Common myeloid progenitor, CD34-positive (primary cell): ENCODE measurements at regions of chr6 and their contacts with region 1.

Region 1: GRCh38 chr6:125913864-125914351 is 42.7 kb upstream of the HINT3 start:
- DNase-seq: no peak
- H3K4me3 ChIP-seq: no peak overlapping the region
- H3K27ac ChIP-seq: no peak overlapping the region
- H3K4me1 ChIP-seq: peaks cover 0 to 18% (median 10%) of the 10 kb centered on the region in 4 experiments
- H3K27me3 ChIP-seq: no peaks in the 10 kb centered on the region

Region 2: DNA sequence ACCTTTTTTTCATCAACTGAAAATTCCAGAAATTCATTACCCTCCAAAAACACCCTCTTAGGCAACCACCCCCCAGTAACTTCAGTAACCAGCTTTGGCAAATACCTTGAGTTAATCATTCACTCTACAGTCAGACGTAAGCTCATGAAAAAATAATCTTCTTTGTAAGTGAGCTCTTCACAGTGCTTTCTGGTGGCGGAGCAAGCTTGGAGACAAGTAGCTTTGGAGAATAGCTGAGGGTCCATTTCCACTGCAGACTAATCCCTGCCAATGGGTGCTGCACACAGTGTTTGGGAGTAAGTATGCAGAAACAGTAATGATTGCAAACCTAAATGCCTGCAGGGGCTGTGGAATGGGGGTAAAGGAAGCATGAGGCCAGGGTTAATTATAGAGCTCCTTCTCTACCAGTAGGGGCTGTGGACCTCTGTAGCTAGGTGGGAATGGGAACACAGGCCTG is 14.2 kb before region 1 on chr6:
- CTCF ChIA-PET with region 1: interaction called, 113 read pairs
- POLR2A ChIA-PET with region 1: no interaction called
- DNase-seq: no peak
- H3K4me3 ChIP-seq: no peak overlapping the region
- H3K27ac ChIP-seq: no peak overlapping the region
- H3K4me1 ChIP-seq: peaks cover 0 to 9% (median 6%) of the 10 kb centered on the region in 4 experiments
- H3K27me3 ChIP-seq: no peaks in the 10 kb centered on the region

Region 3: GRCh38 chr6:125923987-125924568 is 10.2 kb after region 1 on chr6:
- CTCF ChIA-PET with region 1: interaction called, 113 read pairs
- POLR2A ChIA-PET with region 1: interaction called, 3 read pairs
- DNase-seq: peak; percentile 33 to 77 (median 60)
- H3K4me3 ChIP-seq: peak overlapping the region in 2 of 7 experiments; percentile 40
- H3K27ac ChIP-seq: peak overlapping the region in 1 of 2 experiments; percentile 70
- H3K4me1 ChIP-seq: peaks cover 8 to 73% (median 34%) of the 10 kb centered on the region in 4 experiments
- H3K27me3 ChIP-seq: no peaks in the 10 kb centered on the region